ENCODE measurements at regions of chr3 and their contacts with region 1.

Region 1: GRCh38 chr3:30623351-30623750 is 16.9 kb downstream of the TGFBR2 start:
- DNase-seq: no peak
- H3K4me3 ChIP-seq: no peak overlapping the region
- H3K27ac ChIP-seq: peak overlapping the region; percentile 6 to 42
- H3K4me1 ChIP-seq: peaks cover 19 to 36% of the 10 kb centered on the region in 2 donors
- H3K27me3 ChIP-seq: no peaks in the 10 kb centered on the region
- CTCF ChIP-seq: no peak

Region 2: GRCh38 chr3:30180310-30181177 is 442.8 kb before region 1 on chr3:
- intact Hi-C with region 1: no loop called
- DNase-seq: no peak
- H3K4me3 ChIP-seq: no peak overlapping the region
- H3K27ac ChIP-seq: no peak overlapping the region
- H3K4me1 ChIP-seq: peaks cover 0 to 2% of the 10 kb centered on the region in 2 donors
- H3K27me3 ChIP-seq: no peaks in the 10 kb centered on the region
- CTCF ChIP-seq: no peak

Region 3: GRCh38 chr3:30658328-30659052 is 35.1 kb after region 1 on chr3:
- intact Hi-C with region 1: no loop called
- DNase-seq: no peak
- H3K4me3 ChIP-seq: peak overlapping the region in 1 of 2 donors; percentile 41
- H3K27ac ChIP-seq: peak overlapping the region; percentile 62 to 72
- H3K4me1 ChIP-seq: peaks cover 38 to 69% of the 10 kb centered on the region in 2 donors
- H3K27me3 ChIP-seq: no peaks in the 10 kb centered on the region
- CTCF ChIP-seq: no peak

Region 4: DNA sequence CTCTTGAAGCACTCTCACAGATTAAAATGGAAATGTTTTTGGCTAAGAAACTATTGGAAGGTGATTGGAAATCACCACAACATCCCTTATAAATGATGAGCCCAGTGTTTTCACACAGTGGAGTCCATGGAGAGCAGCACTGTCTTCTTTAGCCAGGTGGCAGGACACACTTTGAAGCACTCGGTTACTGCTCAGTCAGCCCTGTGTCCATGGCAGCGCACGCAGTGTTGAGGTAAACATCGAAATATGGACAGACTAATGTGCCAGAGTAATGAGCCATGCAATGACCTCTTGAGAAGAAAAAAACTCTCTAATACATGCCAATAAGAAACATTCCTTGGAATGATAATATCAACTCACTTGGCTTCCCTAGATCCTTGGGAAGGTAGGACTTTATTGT is 49.6 kb after region 1 on chr3:
- intact Hi-C with region 1: loop called (anchors 5 kb)
- DNase-seq: no peak
- H3K4me3 ChIP-seq: no peak overlapping the region
- H3K27ac ChIP-seq: peak overlapping the region; percentile 10 to 14
- H3K4me1 ChIP-seq: peaks cover 0 to 18% of the 10 kb centered on the region in 2 donors
- H3K27me3 ChIP-seq: no peaks in the 10 kb centered on the region
- CTCF ChIP-seq: no peak

Region 5: DNA sequence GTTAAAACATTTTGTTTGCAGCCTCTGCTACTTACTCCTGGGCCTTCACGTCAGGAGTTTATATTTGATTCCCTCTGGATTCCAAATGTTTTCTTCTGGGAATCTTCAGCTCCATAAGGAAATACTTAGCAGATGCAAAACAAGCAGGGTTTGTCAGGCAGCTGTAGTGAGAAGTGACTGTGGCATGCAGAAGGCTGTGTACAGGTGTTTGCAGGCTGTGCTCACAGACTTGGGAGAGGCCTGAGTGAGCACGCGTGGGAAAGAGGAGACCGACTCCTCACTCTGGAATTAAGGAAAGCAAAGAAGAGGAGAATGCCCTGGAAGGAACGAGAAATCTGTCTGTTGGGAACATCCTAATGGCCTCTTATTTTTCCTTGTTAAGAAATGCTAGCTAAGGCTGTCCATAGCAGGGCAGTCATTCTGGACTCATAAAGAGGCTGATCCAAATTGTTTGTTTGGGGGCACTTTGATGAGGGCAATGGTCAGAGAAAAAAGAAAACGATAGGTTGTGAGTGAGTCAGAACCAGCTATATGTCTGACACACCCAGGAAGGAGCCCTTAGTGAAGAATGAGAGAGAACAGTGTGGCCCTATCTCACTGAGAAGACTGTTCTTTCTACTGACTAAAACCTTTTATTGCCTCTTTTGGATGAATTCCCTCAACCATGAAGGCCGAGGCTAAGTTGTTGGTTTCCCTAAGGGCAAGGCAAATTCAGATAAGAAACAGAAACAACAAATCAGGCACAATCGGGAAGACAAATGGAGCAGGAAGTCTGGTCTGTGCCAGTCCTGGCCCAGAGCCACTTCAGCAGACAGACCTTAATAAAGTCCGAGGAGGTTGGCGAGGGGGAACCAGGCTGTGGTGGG is 65.7 kb after region 1 on chr3:
- intact Hi-C with region 1: no loop called
- DNase-seq: no peak
- H3K4me3 ChIP-seq: no peak overlapping the region
- H3K27ac ChIP-seq: peak overlapping the region; percentile 73 to 76
- H3K4me1 ChIP-seq: peaks cover 15 to 66% of the 10 kb centered on the region in 2 donors
- H3K27me3 ChIP-seq: no peaks in the 10 kb centered on the region
- CTCF ChIP-seq: no peak

Measured in ascending aorta (tissue), 2 donors.